ENCODE measurements at regions of chr16 and their contacts with region 1.

Region 1: DNA sequence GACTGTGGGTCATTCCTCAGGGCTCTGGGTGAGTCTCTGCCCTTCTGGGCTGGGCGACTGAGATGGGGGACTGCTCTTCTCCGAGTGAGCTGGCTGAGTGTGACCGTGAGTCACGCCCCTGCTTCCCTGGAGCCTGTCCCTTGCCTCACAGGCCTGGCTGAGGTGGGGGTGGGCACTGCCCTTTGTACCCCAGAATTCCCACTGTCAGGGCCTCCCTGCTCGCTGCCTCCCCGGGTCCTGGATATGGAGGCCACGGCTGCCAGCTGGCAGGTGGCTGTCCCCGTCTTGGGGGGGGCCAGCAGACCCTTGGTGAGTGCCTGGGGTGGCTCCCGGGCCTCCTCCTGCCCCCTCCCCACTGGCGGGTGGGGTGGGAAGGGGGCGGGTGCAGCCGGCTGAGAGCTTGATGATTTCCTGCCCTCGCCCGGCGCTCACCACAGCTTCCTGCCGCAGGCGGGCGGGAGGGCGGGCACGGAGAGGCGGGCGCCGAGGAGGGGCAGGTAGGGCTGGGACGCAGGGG is at the start of gene LAT:
- DNase-seq: peak; percentile 67 to 87 (median 84)
- ATAC-seq: peak; percentile 86
- H3K4me3 ChIP-seq: peak within 1 kb of the TSS; percentile 98
- H3K4me3 Mint-ChIP-seq: peak within 1 kb of the TSS; percentile 94 to 100 (median 98)
- H3K27ac ChIP-seq: peak within 1 kb of the TSS; percentile 87
- H3K27ac Mint-ChIP-seq: peak within 1 kb of the TSS; percentile 94 to 99 (median 97)
- H3K4me1 ChIP-seq: peaks cover 41% of the 10 kb centered on the region in 2 donors
- H3K4me1 Mint-ChIP-seq: peaks cover 41 to 54% (median 49%) of the 10 kb centered on the region in 7 donors
- H3K27me3 ChIP-seq: no peaks in the 10 kb centered on the region
- H3K27me3 Mint-ChIP-seq: no peaks in the 10 kb centered on the region
- total RNA-seq, gene LAT: 179 to 476 (median 342) TPM

Region 2: GRCh38 chr16:28999577-28999976 is 14.9 kb after region 1 on chr16:
- CTCF ChIA-PET with region 1: no interaction called
- POLR2A ChIA-PET with region 1: interaction called, 134 read pairs
- intact Hi-C with region 1: no loop called
- DNase-seq: no peak
- ATAC-seq: no peak
- H3K4me3 ChIP-seq: no peak overlapping the region
- H3K4me3 Mint-ChIP-seq: peak overlapping the region in 3 of 10 donors; percentile 16 to 38 (median 23)
- H3K27ac ChIP-seq: no peak overlapping the region
- H3K27ac Mint-ChIP-seq: peak overlapping the region in 7 of 9 donors; percentile 33 to 76 (median 48)
- H3K4me1 ChIP-seq: peaks cover 0 to 2% of the 10 kb centered on the region in 2 donors
- H3K4me1 Mint-ChIP-seq: peaks cover 7 to 26% (median 21%) of the 10 kb centered on the region in 7 donors
- H3K27me3 ChIP-seq: no peaks in the 10 kb centered on the region
- H3K27me3 Mint-ChIP-seq: peaks cover 0 to 2% (median 0%) of the 10 kb centered on the region in 5 donors

Region 3: GRCh38 chr16:29007730-29008593 is 23.3 kb after region 1 on chr16:
- CTCF ChIA-PET with region 1: interaction called, 8 read pairs
- POLR2A ChIA-PET with region 1: interaction called, 194 read pairs
- intact Hi-C with region 1: loop called (anchors 1 to 2 kb)
- DNase-seq: peak in 8 of 9 donors; percentile 54 to 77 (median 68)
- ATAC-seq: peak; percentile 80
- H3K4me3 ChIP-seq: no peak overlapping the region
- H3K4me3 Mint-ChIP-seq: peak overlapping the region; percentile 64 to 88 (median 83)
- H3K27ac ChIP-seq: peak overlapping the region; percentile 74
- H3K27ac Mint-ChIP-seq: peak overlapping the region; percentile 92 to 99 (median 96)
- H3K4me1 ChIP-seq: peaks cover 38 to 52% of the 10 kb centered on the region in 2 donors
- H3K4me1 Mint-ChIP-seq: peaks cover 33 to 73% (median 52%) of the 10 kb centered on the region in 7 donors
- H3K27me3 ChIP-seq: no peaks in the 10 kb centered on the region
- H3K27me3 Mint-ChIP-seq: no peaks in the 10 kb centered on the region

Region 4: GRCh38 chr16:29012913-29013553 is 28.4 kb after region 1 on chr16:
- CTCF ChIA-PET with region 1: interaction called, 8 read pairs
- POLR2A ChIA-PET with region 1: interaction called, 194 read pairs
- intact Hi-C with region 1: loop called (anchors 1 to 2 kb)
- DNase-seq: peak in 7 of 9 donors; percentile 65 to 88 (median 77)
- ATAC-seq: peak; percentile 87
- H3K4me3 ChIP-seq: no peak overlapping the region
- H3K4me3 Mint-ChIP-seq: peak overlapping the region; percentile 51 to 81 (median 62)
- H3K27ac ChIP-seq: peak overlapping the region; percentile 71
- H3K27ac Mint-ChIP-seq: peak overlapping the region; percentile 89 to 99 (median 97)
- H3K4me1 ChIP-seq: peaks cover 30 to 58% of the 10 kb centered on the region in 2 donors
- H3K4me1 Mint-ChIP-seq: peaks cover 38 to 82% (median 48%) of the 10 kb centered on the region in 7 donors
- H3K27me3 ChIP-seq: no peaks in the 10 kb centered on the region
- H3K27me3 Mint-ChIP-seq: no peaks in the 10 kb centered on the region

Region 5: GRCh38 chr16:29023279-29024277 is 38.9 kb after region 1 on chr16:
- CTCF ChIA-PET with region 1: interaction called, 10 read pairs
- POLR2A ChIA-PET with region 1: interaction called, 140 read pairs
- intact Hi-C with region 1: no loop called
- DNase-seq: peak in 3 of 9 donors; percentile 20 to 31 (median 25)
- ATAC-seq: peak; percentile 36
- H3K4me3 ChIP-seq: no peak overlapping the region
- H3K4me3 Mint-ChIP-seq: peak overlapping the region in 9 of 10 donors; percentile 21 to 80 (median 69)
- H3K27ac ChIP-seq: peak overlapping the region; percentile 68
- H3K27ac Mint-ChIP-seq: peak overlapping the region; percentile 63 to 96 (median 93)
- H3K4me1 ChIP-seq: peaks cover 17 to 46% of the 10 kb centered on the region in 2 donors
- H3K4me1 Mint-ChIP-seq: peaks cover 36 to 74% (median 55%) of the 10 kb centered on the region in 7 donors
- H3K27me3 ChIP-seq: no peaks in the 10 kb centered on the region
- H3K27me3 Mint-ChIP-seq: no peaks in the 10 kb centered on the region

Region 6: DNA sequence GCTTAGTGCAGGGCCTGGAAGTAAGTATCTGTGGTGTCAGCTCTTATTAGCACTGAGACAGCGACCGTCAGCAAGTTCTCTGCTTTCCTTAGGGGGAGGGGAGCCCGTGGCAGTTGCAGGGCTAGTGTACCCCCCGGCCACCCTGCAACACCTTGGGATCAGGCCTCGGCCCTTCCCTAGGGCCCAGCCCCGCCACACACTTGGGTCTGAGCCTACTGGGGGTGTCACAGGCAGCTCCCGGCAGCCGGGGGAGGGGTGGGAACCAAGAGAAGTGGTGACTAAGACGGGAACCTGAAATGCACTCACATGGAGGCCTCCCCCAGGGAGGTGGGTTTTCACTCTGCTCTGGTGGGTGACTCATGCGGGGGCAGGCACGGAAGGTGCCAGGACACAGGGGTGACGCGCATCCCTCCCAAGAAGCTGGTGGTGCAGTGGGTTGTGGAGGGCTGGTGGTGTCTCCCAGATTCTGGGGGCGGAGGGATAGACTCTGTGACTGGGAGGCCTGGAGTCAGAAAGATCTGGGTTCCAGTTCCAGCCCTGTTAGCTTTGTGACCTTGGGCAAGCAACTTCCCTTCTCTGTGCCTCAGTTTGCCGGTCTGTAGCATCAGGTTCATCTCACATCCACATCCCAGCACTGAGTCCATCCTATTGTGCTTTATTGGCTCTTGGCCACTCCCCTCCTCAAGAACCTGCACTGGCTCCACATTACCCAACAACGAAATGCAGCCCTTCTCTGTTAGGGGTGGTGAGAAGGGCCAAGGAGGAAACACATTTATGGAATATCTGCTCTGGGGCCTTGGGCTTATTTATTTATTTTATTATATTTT is 44.7 kb after region 1 on chr16:
- CTCF ChIA-PET with region 1: interaction called, 6 read pairs
- POLR2A ChIA-PET with region 1: interaction called, 140 read pairs
- intact Hi-C with region 1: no loop called
- DNase-seq: peak in 2 of 9 donors; percentile 58 to 85
- ATAC-seq: peak; percentile 66
- H3K4me3 ChIP-seq: peak overlapping the region; percentile 34
- H3K4me3 Mint-ChIP-seq: peak overlapping the region in 6 of 10 donors; percentile 17 to 46 (median 38)
- H3K27ac ChIP-seq: no peak overlapping the region
- H3K27ac Mint-ChIP-seq: peak overlapping the region in 8 of 9 donors; percentile 38 to 90 (median 63)
- H3K4me1 ChIP-seq: peaks cover 14 to 30% of the 10 kb centered on the region in 2 donors
- H3K4me1 Mint-ChIP-seq: peaks cover 12 to 46% (median 39%) of the 10 kb centered on the region in 7 donors
- H3K27me3 ChIP-seq: no peaks in the 10 kb centered on the region
- H3K27me3 Mint-ChIP-seq: no peaks in the 10 kb centered on the region

Measured in naive thymus-derived CD4-positive, alpha-beta T cell (primary cell).